ENCODE measurements at regions of chr6 and their contacts with region 1.

Region 1: DNA sequence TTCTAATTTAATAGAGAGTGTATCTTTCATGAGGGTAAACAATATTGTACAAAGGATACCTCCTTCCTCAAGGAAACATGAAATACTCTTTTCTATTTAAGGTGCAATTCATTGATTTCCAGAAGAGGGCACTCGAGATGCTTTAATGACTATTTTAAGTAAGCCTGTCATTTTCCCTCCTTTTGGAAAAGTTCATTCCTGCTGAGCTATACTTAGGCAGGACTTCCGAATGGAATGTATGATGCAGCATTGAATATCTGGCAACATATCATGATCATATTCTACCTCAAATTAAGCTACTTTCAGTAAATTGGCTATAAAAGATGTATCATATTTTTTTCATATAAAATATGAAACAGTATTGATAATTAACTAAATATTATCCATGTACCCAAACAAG is 5.0 kb downstream of the DST start:
- DNase-seq: peak; percentile 67
- ATAC-seq: peak; percentile 64
- H3K4me3 ChIP-seq: no peak overlapping the region
- H3K27ac ChIP-seq: no peak overlapping the region
- H3K4me1 ChIP-seq: peaks cover 13% of the 10 kb centered on the region
- H3K27me3 ChIP-seq: no peaks in the 10 kb centered on the region
- CTCF ChIP-seq: peak; percentile 83
- EP300 ChIP-seq: no peak
- POLR2A ChIP-seq: no peak
- RAD21 ChIP-seq: peak; percentile 77

Region 2: DNA sequence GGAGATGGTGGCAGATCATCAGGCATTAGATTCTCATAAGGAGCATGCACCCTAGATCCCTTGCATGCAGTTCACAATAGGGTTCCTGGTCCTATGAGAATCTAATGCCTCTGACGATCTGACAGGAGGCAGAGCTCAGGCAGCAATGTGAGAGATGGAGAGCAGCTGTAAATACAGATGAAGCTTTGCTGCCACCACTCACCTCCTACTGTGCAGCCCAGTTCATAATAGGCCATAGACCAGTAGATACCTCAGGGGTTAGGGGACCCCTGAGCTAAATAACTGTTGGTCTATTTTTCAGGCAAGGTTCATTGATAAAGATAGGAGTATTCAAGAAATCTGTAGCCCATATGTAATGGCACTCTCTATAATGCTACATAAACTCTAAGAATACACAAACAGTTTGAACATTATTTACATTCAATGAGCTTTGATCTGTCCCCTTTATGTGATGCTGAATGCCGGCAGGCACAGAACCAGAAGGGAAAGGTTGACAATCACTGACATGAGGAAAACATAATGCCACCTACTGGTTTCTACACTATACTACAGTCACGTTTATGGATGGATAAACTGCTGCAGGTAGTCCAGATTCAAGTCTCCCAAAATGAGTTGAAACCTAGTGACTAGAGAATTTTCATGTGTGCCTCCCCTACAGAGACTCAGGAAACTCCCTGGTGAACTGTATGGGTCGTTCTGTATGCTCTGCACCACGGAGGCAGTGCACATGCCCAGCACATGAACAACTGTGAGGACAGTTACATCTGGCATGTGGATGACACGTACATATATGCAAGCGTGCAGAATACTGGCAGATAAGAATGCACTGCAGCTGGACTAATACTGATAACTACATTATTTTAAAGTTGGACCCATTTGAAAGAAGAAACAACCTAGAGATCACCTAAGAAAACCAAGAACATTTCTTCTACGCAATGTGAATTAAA is 67.0 kb before region 1 on chr6:
- CTCF ChIA-PET with region 1: no interaction called
- POLR2A ChIA-PET with region 1: no interaction called
- in situ Hi-C with region 1: no loop called
- intact Hi-C with region 1: no loop called
- DNase-seq: peak; percentile 60
- ATAC-seq: peak; percentile 96
- H3K4me3 ChIP-seq: no peak overlapping the region
- H3K27ac ChIP-seq: no peak overlapping the region
- H3K4me1 ChIP-seq: peaks cover 29% of the 10 kb centered on the region
- H3K27me3 ChIP-seq: no peaks in the 10 kb centered on the region
- CTCF ChIP-seq: peak; percentile 82
- EP300 ChIP-seq: no peak
- POLR2A ChIP-seq: no peak
- RAD21 ChIP-seq: peak; percentile 42; the same call in 1 of the 2 replicates

Region 3: DNA sequence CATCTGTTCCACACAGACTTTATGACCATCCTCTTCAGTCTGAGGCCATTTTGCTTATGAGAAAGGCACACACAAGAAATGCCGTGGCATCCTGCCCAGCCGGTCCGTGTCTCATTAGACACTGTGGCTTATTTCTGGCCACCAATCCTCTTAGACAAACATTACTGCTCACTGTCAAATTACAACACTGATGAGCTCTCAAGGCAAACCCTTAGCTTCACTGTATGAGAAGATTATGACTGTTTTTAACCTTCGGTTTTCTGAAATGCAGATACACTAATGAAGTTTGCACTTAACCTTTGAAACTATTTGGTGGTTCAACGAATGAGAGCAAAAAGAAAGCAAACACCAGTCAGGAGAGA is 55.6 kb after region 1 on chr6:
- CTCF ChIA-PET with region 1: interaction called, 65 read pairs
- POLR2A ChIA-PET with region 1: interaction called, 52 read pairs
- in situ Hi-C with region 1: loop called (anchors 5 kb)
- intact Hi-C with region 1: loop called (anchors 2 kb)
- DNase-seq: peak; percentile 75
- ATAC-seq: peak; percentile 84
- H3K4me3 ChIP-seq: peak overlapping the region; percentile 56 to 64 (median 60)
- H3K27ac ChIP-seq: peak overlapping the region; percentile 68
- H3K4me1 ChIP-seq: peaks cover 55% of the 10 kb centered on the region
- H3K27me3 ChIP-seq: no peaks in the 10 kb centered on the region
- CTCF ChIP-seq: no peak
- EP300 ChIP-seq: no peak
- POLR2A ChIP-seq: peak in 1 of 2 experiments; percentile 67; a peak in 2 of 4 replicates
- RAD21 ChIP-seq: no peak

Region 4: DNA sequence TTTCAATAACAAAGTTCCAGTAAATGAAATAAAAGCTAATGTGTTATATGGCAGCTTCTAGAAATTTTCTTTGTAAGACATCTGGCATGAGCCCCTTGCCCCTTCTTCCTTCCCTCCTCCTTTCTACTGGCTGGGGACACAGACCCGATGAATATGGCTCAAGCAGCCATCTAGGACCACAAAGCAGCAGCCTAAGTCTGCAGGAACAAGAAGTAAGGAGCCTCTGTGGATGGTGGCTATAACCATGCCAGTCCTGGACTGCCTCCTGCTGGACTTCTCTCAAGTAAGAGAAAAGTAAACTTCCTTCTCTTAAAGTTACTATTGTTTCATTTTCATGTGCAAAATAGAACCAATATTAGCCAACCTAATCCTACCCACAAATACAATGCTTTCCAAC is 119.9 kb after region 1 on chr6:
- CTCF ChIA-PET with region 1: interaction called, 24 read pairs
- POLR2A ChIA-PET with region 1: no interaction called
- in situ Hi-C with region 1: loop called (anchors 5 kb)
- intact Hi-C with region 1: loop called (anchors 1 kb)
- DNase-seq: peak; percentile 72
- ATAC-seq: peak; percentile 97
- H3K4me3 ChIP-seq: no peak overlapping the region
- H3K27ac ChIP-seq: no peak overlapping the region
- H3K4me1 ChIP-seq: no peaks in the 10 kb centered on the region; the same call in 1 of the 2 replicates
- H3K27me3 ChIP-seq: no peaks in the 10 kb centered on the region
- CTCF ChIP-seq: peak; percentile 93
- EP300 ChIP-seq: no peak
- POLR2A ChIP-seq: no peak
- RAD21 ChIP-seq: peak; percentile 91

Region 5: DNA sequence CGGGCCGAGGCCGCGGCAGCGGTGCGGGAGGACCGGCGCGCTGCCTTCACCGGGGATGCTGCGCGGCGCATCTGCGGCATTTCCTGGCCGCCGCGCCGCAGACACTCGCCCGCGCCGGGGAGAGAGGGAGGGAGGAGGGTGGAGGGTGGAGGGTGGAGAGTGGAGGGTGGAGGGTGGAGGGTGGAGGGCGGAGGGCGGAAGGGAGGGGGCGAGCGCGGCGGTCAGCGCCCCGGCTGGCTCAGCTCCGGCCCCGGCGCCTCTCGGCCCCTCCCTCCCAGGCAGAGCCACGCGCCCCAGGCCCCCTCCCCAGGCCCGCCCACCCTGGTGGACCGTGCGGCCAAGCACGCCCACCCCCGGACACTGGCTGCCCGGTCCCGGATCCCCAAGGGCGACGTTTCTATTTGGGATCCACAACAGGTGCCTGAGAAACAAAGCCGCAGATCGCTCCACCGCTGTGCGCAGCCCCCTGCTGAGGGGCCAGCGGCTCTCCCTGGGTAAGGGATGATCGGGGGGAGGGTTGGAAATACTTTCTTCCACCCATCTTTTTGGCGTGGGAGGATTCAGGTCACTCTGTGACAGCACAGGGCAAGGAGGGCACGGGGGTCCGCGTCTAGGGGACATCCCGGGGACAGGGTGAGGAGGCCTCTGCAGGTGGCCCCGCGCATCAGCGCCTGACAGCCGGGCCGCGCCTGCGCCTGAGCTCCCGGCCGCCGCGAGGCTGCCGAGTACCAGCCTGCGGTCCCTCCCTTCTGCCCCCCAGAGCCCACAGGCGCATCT is 206.1 kb after region 1 on chr6:
- CTCF ChIA-PET with region 1: no interaction called
- POLR2A ChIA-PET with region 1: interaction called, 3 read pairs
- in situ Hi-C with region 1: loop called (anchors 10 kb)
- intact Hi-C with region 1: loop called (anchors 1 kb)
- DNase-seq: peak; percentile 77
- ATAC-seq: peak; percentile 99
- H3K4me3 ChIP-seq: peak overlapping the region; percentile 57 to 80 (median 74)
- H3K27ac ChIP-seq: no peak overlapping the region
- H3K4me1 ChIP-seq: peaks cover 8% of the 10 kb centered on the region
- H3K27me3 ChIP-seq: peaks cover 3 to 7% of the 10 kb centered on the region in 2 experiments; a peak in 3 of 5 replicates
- CTCF ChIP-seq: peak; percentile 75
- EP300 ChIP-seq: no peak
- POLR2A ChIP-seq: 0 out of 4 replicates have a peak, but pooled peaks of 1 of the 2 experiments have one; percentile 33
- RAD21 ChIP-seq: peak; percentile 85

Region 6: GRCh38 chr6:57190140-57190539 is 552.5 kb after region 1 on chr6:
- CTCF ChIA-PET with region 1: no interaction called
- POLR2A ChIA-PET with region 1: no interaction called
- in situ Hi-C with region 1: no loop called
- intact Hi-C with region 1: no loop called
- DNase-seq: peak; percentile 55
- ATAC-seq: peak; percentile 86
- H3K4me3 ChIP-seq: no peak overlapping the region
- H3K27ac ChIP-seq: no peak overlapping the region
- H3K4me1 ChIP-seq: no peaks in the 10 kb centered on the region
- H3K27me3 ChIP-seq: no peaks in the 10 kb centered on the region
- CTCF ChIP-seq: peak; percentile 45
- EP300 ChIP-seq: no peak
- POLR2A ChIP-seq: no peak
- RAD21 ChIP-seq: peak; percentile 47; the same call in 1 of the 2 replicates

Measured in HepG2 (cell line).